ENCODE measurements at regions of chr5 and their contacts with region 1.

Region 1: DNA sequence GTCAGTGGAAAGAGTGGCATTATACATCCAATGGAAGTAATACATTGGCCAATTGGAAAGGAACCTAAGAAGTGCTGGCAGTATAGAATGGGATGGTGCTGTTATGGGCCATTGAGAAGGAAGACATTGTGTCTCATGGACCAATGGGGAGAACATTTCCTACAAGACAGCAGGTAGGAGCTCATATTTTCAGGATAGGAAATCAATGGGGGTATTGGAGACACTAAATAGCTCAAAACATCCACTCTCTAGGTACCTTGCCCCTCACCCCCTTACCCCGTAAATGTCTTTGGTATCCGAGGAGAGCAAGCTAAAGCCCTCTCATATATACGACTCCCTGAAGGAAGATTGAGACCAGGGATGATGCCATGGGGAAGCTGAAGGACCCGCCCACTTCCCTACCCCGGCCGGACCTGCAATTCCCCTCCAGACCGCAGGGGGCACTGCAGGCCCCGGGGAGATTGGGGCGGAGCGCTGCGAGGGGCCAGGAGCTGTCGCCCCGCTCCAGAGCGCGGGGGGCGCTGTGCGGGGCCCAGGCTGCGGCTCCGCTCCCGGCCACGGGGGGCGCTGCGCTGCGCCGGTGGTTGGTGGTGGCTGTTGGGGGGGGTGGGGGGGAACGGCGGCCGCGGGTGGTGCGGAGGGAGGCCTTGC is at the start of gene KDM3B:
- DNase-seq: peak in 8 of 10 donors; percentile 40 to 86 (median 64)
- H3K4me3 ChIP-seq: peak within 1 kb of the TSS; percentile 62 to 98 (median 89)
- H3K27ac ChIP-seq: peak within 1 kb of the TSS; percentile 65 to 99 (median 96)
- H3K27me3 ChIP-seq: no peaks in the 10 kb centered on the region
- CTCF ChIP-seq: peak; percentile 77 to 97 (median 90)
- total RNA-seq, gene KDM3B: 50.2 to 81.2 (median 66.4) TPM

Region 2: DNA sequence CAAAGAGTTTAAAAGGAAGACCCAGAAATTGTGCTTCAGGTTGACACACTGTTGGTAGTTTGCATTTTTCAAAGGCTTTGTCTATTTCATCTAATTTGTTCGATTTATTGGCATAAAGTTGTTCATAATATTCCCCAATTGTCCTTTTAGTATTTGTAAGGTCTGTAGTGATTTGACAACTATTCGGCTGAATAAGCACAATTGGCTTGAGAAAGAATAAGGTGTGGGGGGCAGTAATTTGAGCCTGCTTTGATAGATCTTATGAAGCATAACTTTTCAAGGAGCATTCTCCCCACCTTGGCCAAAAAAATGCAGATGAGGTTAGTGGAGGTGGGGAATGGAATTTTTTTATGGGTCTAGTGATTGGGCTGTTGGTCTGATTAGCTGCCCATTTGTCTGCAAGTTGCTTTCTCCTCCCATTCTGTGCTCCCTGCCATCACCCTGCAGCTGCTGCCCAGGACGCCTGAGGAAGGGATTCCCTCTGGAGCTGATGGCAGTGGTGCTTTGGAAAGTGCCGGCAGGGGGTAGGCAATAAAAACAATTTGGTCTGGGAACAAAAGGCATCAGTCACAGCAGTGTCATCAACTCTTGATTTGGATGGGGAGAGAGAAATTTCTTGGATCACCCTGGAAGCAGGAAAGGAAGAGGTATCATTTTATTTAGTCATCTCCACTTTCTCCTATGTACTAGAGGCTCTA is 241.8 kb before region 1 on chr5:
- intact Hi-C with region 1: no loop called
- DNase-seq: no peak
- H3K4me3 ChIP-seq: no peak overlapping the region
- H3K27ac ChIP-seq: no peak overlapping the region
- H3K27me3 ChIP-seq: no peaks in the 10 kb centered on the region
- CTCF ChIP-seq: no peak

Region 3: GRCh38 chr5:138337685-138338410 is 14.3 kb before region 1 on chr5 and contains the start of gene FAM53C:
- intact Hi-C with region 1: loop called (anchors 1 kb)
- DNase-seq: peak; percentile 80 to 95 (median 90)
- H3K4me3 ChIP-seq: peak within 1 kb of the TSS; percentile 62 to 98 (median 91)
- H3K27ac ChIP-seq: peak within 1 kb of the TSS; percentile 93 to 100 (median 100)
- H3K27me3 ChIP-seq: no peaks in the 10 kb centered on the region
- CTCF ChIP-seq: peak in 17 of 56 donors; percentile 0 to 40 (median 24)
- total RNA-seq, gene FAM53C: 31.8 to 57.6 (median 42.1) TPM

Region 4: DNA sequence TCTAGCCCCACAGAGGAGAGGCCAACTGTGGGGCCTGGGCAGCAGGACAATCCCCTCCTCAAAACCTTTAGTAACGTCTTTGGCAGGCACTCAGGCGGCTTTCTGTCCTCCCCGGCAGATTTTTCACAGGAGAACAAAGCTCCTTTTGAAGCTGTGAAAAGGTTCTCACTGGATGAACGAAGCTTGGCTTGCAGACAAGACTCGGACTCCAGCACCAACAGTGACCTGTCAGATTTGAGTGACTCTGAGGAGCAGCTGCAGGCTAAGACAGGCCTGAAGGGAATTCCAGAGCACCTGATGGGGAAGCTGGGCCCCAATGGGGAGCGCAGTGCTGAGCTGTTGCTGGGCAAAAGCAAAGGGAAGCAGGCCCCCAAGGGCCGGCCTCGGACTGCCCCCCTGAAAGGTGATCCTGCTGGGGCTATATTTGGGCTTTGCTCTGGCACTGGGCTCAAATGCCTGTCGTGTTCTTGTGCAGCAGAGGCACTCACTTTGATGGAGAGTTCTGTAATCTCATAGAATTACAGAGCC is 39.7 kb after region 1 on chr5:
- intact Hi-C with region 1: loop called in 1 of 2 experiments (anchors 5 kb)
- DNase-seq: peak in 8 of 10 donors; percentile 37 to 66 (median 54)
- H3K4me3 ChIP-seq: peak overlapping the region in 3 of 59 donors; percentile 14 to 20 (median 17)
- H3K27ac ChIP-seq: peak overlapping the region; percentile 3 to 90 (median 81)
- H3K27me3 ChIP-seq: no peaks in the 10 kb centered on the region
- CTCF ChIP-seq: peak in 1 of 56 donors; percentile 18

Region 5: GRCh38 chr5:138832218-138832617 is 480.0 kb after region 1 on chr5:
- intact Hi-C with region 1: no loop called
- DNase-seq: no peak
- H3K4me3 ChIP-seq: no peak overlapping the region
- H3K27ac ChIP-seq: no peak overlapping the region
- H3K27me3 ChIP-seq: no peaks in the 10 kb centered on the region
- CTCF ChIP-seq: no peak

Measured in dorsolateral prefrontal cortex (tissue), 120 donors.